IMR-90 (cell line): ENCODE measurements at regions of chr13 and their contacts with region 1.

Region 1: GRCh38 chr13:114132419-114133121 is at the start of gene RASA3:
- DNase-seq: peak; percentile 79
- ATAC-seq: peak; percentile 82
- H3K4me3 ChIP-seq: peak within 1 kb of the TSS; percentile 93
- H3K27ac ChIP-seq: peak within 1 kb of the TSS; percentile 95
- H3K4me1 ChIP-seq: peaks cover 20% of the 10 kb centered on the region
- H3K27me3 ChIP-seq: no peaks in the 10 kb centered on the region
- CTCF ChIP-seq: no peak
- POLR2A ChIP-seq: peak; percentile 66; the same call in 1 of the 2 replicates
- RAD21 ChIP-seq: no peak
- total RNA-seq, gene RASA3: 21.0 and 22.8 TPM in 2 replicates

Region 2: DNA sequence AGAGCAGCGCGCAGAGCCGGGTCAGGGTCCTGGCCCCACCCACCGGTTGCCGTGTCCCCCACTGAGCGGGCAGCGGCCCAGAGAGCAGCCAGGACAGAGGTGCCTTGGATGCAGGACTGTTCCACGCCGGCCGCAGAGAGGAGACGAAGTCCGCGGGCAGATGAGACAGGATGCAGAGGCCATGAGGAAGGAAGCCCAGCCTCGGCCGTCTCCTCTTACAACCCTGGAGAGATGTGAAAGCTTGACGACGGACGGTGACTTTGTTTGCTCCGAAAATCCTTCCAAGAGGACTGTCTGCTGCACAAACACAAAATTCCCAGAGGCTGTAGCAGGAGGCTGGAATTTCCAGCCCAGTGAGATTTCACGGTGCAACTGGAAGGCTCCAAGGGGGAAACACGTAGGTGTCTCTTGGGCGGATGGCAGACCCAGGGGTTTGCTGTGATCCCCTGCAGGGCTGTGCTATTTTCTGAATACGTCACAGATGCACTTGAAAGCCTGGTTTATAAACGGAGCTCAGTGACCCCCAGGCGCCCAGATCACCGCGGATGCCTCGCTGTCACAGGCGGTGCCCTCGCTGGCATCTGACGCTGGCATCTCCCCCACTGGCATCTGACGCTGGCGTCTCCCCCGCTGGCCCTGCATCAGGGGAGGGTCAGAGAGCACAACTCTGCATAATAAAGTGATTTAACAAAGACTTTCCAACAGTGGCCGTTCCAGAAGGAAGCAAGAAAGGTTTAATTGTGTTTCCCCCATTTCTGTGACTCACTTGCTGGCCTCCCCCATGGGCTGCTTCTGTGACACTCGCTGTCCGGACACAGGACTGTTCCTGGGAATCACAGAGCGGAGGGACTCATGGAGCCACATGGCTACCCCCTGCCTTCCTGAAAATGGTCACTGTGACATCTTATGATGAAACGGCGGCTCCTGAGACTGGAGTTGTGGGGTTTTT is 96.7 kb before region 1 on chr13:
- CTCF ChIA-PET with region 1: no interaction called
- POLR2A ChIA-PET with region 1: no interaction called
- dilution Hi-C with region 1: no loop called
- in situ Hi-C with region 1: no loop called
- intact Hi-C with region 1: loop called (anchors 2 kb)
- DNase-seq: peak; percentile 35
- ATAC-seq: 0 out of 2 replicates have a peak, but pooled peaks have one; percentile 5
- H3K4me3 ChIP-seq: no peak overlapping the region
- H3K27ac ChIP-seq: peak overlapping the region; percentile 30
- H3K4me1 ChIP-seq: peaks cover 37% of the 10 kb centered on the region
- H3K27me3 ChIP-seq: no peaks in the 10 kb centered on the region
- CTCF ChIP-seq: no peak
- POLR2A ChIP-seq: no peak
- RAD21 ChIP-seq: no peak

Region 3: DNA sequence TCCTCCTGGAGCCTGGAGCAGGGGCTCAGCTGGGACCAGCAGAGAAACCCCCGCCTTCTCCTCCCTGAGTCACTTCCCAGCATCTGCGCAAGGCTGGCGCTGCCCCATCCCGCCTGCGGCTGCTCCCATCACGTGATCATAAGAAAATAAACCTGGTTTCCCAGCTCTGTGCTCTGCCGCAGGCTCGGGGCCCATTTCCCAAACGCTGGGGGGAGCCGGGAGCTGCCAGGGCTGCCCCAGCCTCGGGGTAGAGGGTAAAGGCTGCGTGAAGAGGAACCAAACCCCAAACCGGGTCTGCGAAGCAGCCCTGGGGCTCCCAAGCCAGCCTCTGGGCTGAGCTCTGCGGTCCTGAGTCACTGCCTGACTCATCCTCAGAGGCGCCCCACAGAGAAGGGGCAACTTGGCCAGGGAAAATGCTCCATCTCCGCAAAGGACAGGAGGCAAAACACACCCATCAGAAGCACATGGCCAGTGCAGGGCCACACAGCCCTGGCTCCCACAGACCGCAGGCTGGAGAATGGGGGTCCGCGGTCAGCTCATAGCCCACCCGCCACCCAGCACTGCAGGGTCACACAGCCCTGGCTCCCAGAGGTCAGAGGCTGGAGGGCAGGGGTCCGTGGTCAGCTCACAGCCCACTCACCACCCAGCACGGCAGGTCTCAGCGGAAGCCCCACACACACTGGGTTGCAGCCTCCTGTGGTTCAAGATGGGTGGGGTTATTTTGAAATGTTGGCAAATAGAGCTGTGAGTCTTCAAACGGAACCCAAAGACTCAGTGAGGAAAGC is 67.2 kb before region 1 on chr13:
- CTCF ChIA-PET with region 1: interaction called, 3 read pairs
- POLR2A ChIA-PET with region 1: interaction called, 6 read pairs
- dilution Hi-C with region 1: no loop called
- in situ Hi-C with region 1: loop called (anchors 5 kb)
- intact Hi-C with region 1: loop called (anchors 1 kb)
- DNase-seq: peak; percentile 98
- ATAC-seq: peak; percentile 84
- H3K4me3 ChIP-seq: peak overlapping the region; percentile 13; the same call in 1 of the 2 replicates
- H3K27ac ChIP-seq: peak overlapping the region; percentile 98
- H3K4me1 ChIP-seq: peaks cover 52% of the 10 kb centered on the region
- H3K27me3 ChIP-seq: no peaks in the 10 kb centered on the region
- CTCF ChIP-seq: peak; percentile 12; the same call in 1 of the 2 replicates
- POLR2A ChIP-seq: peak; percentile 55; the same call in 1 of the 2 replicates
- RAD21 ChIP-seq: peak; percentile 19; the same call in 1 of the 2 replicates

Region 4: DNA sequence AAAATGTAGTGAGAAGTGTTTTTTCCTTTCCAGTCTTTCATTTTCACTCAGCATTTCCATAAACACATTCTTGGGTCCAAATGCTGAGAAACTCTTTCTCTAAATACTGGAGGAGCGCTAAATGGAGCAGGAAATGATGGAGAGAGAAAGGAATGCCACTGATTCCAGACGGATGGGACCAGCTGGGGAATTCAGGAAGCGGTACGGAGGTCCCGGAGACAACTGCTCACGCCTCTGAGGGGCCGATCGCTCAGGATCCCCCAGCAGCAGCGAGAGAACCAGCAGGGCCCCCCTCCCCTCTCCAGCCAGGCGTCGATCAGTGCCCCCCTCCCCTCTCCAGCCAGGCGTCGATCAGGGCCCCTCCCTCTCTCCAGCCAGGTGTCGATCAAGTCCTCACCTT is 13.4 kb before region 1 on chr13:
- CTCF ChIA-PET with region 1: no interaction called
- POLR2A ChIA-PET with region 1: interaction called, 4 read pairs
- dilution Hi-C with region 1: no loop called
- in situ Hi-C with region 1: no loop called
- intact Hi-C with region 1: loop called (anchors 1 kb)
- DNase-seq: peak; percentile 95
- ATAC-seq: peak; percentile 75
- H3K4me3 ChIP-seq: no peak overlapping the region; the same call in 1 of the 2 replicates
- H3K27ac ChIP-seq: peak overlapping the region; percentile 99
- H3K4me1 ChIP-seq: peaks cover 37% of the 10 kb centered on the region
- H3K27me3 ChIP-seq: no peaks in the 10 kb centered on the region
- CTCF ChIP-seq: no peak
- POLR2A ChIP-seq: no peak; the same call in 1 of the 2 replicates
- RAD21 ChIP-seq: peak; percentile 19

Region 5: DNA sequence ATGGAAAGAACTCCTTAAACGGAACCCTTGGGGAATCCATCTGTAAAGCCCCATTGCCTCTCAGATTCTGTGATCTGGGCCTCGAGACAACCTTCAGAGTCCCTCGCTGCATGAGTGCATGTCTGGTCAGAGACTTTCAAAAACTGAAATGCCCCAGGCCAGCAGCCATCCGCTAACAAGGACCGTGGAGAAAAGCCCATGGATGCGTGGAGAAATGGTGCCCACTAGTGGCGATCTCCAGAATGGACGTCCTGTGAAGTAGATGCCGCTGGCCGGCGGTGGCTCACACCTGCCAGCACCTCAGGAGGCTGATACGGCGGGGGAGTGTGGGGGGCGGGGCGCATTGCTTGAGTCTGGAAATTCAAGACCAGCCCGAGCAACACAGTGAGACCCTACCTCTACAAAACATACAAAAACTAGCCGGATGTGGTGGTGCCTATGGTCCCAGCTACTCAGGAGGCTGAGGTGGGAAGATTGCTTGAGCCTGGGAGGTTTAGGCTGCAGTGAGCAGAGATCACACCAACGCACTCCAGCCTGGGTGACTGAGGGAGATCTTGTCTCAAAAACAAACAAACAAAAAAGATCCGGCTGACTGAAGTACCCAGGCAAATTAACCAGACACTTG is 94.2 kb after region 1 on chr13:
- CTCF ChIA-PET with region 1: no interaction called
- POLR2A ChIA-PET with region 1: no interaction called
- dilution Hi-C with region 1: no loop called
- in situ Hi-C with region 1: no loop called
- intact Hi-C with region 1: loop called (anchors 2 kb)
- DNase-seq: peak; percentile 79
- ATAC-seq: peak; percentile 93
- H3K4me3 ChIP-seq: no peak overlapping the region
- H3K27ac ChIP-seq: no peak overlapping the region
- H3K4me1 ChIP-seq: peaks cover 10% of the 10 kb centered on the region
- H3K27me3 ChIP-seq: no peaks in the 10 kb centered on the region
- CTCF ChIP-seq: peak; percentile 97
- POLR2A ChIP-seq: peak; percentile 63; the same call in 1 of the 2 replicates
- RAD21 ChIP-seq: peak; percentile 99